ENCODE measurements at regions of chr6 and their contacts with region 1.

Region 1: GRCh38 chr6:121055572-121056163 is 278.6 kb downstream of the TBC1D32 start:
- DNase-seq: no peak
- ATAC-seq: peak in 3 of 4 donors; percentile 67 to 69 (median 69)
- H3K4me3 ChIP-seq: no peak overlapping the region
- H3K27ac ChIP-seq: no peak overlapping the region
- H3K4me1 ChIP-seq: no peaks in the 10 kb centered on the region
- H3K27me3 ChIP-seq: no peaks in the 10 kb centered on the region
- CTCF ChIP-seq: peak; percentile 54 to 81 (median 68)
- POLR2A ChIP-seq: no peak

Region 2: GRCh38 chr6:120373185-120373584 is 682.5 kb before region 1 on chr6:
- intact Hi-C with region 1: no loop called
- DNase-seq: no peak
- ATAC-seq: no peak
- H3K4me3 ChIP-seq: no peak overlapping the region
- H3K27ac ChIP-seq: no peak overlapping the region
- H3K4me1 ChIP-seq: no peaks in the 10 kb centered on the region
- H3K27me3 ChIP-seq: no peaks in the 10 kb centered on the region
- CTCF ChIP-seq: no peak
- POLR2A ChIP-seq: no peak

Region 3: DNA sequence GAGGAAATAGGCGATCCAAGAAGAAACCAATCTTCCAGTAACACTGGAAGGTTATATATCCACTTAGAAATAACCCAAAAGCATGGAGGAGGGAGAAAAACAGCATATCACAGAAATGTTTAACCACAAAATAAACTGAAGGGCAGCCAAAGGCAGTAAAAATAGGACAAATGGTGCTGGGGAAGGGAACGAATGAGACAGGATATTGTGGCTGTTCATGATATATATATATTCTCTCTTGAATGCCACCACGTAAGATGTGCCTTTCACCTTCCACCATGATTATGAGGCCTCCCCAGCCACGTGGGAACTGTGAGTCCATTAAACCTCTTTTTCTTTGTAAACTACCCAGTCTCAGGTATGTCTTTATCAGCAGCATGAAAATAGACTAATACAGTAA is 116.2 kb after region 1 on chr6:
- intact Hi-C with region 1: no loop called
- DNase-seq: no peak
- ATAC-seq: no peak
- H3K4me3 ChIP-seq: no peak overlapping the region
- H3K27ac ChIP-seq: no peak overlapping the region
- H3K4me1 ChIP-seq: no peaks in the 10 kb centered on the region
- H3K27me3 ChIP-seq: no peaks in the 10 kb centered on the region
- CTCF ChIP-seq: no peak
- POLR2A ChIP-seq: no peak

Region 4: DNA sequence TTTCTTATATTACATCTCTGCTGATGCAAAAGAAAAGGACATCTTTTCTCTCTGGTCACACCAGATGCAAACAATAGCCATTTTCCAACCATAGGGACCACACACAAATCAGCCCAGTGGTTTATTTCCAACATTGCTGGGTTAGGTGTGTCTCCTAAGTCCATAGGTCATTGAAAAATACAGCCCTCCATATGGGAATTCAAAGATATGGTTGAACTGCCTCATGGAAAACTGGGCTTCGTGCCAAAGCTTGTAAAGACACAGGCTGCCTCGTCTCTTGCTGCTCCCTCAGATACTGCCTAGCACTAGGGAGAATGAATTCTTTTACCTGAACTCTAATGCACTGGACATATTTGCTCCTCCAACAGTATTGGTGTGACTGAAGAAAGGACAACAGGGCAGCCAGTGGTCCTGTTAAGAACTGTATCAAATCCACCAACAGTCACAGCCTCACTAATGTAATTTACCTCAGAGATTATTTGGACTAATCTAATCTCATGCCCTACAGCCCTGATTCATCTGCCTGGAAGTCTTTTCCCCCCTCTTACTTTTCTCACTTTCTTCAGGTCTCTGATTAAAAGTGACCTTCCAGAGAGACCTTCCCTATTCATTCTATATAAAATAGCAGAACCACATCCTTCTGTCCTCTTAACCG is 326.9 kb after region 1 on chr6:
- intact Hi-C with region 1: no loop called
- DNase-seq: no peak
- ATAC-seq: no peak
- H3K4me3 ChIP-seq: no peak overlapping the region
- H3K27ac ChIP-seq: no peak overlapping the region
- H3K4me1 ChIP-seq: no peaks in the 10 kb centered on the region
- H3K27me3 ChIP-seq: no peaks in the 10 kb centered on the region
- CTCF ChIP-seq: no peak
- POLR2A ChIP-seq: no peak

Region 5: GRCh38 chr6:121393731-121394505 is 338.2 kb after region 1 on chr6:
- intact Hi-C with region 1: loop called in 2 of 10 experiments (anchors 10 kb)
- DNase-seq: no peak
- ATAC-seq: no peak
- H3K4me3 ChIP-seq: no peak overlapping the region
- H3K27ac ChIP-seq: no peak overlapping the region
- H3K4me1 ChIP-seq: no peaks in the 10 kb centered on the region
- H3K27me3 ChIP-seq: no peaks in the 10 kb centered on the region
- CTCF ChIP-seq: no peak
- POLR2A ChIP-seq: no peak

Region 6: GRCh38 chr6:122033539-122034181 is 978.0 kb after region 1 on chr6:
- intact Hi-C with region 1: loop called in 2 of 10 experiments (anchors 5 to 10 kb)
- DNase-seq: no peak
- ATAC-seq: peak; percentile 71 to 90 (median 86)
- H3K4me3 ChIP-seq: no peak overlapping the region
- H3K27ac ChIP-seq: peak overlapping the region in 3 of 12 donors; percentile 6 to 30 (median 9)
- H3K4me1 ChIP-seq: peaks cover 0 to 8% (median 0%) of the 10 kb centered on the region in 12 donors
- H3K27me3 ChIP-seq: no peaks in the 10 kb centered on the region
- CTCF ChIP-seq: peak; percentile 48 to 77 (median 63)
- POLR2A ChIP-seq: no peak

Region 7: GRCh38 chr6:122289762-122290539 is 1234.3 kb after region 1 on chr6:
- intact Hi-C with region 1: loop called in 2 of 10 experiments (anchors 10 kb)
- DNase-seq: no peak
- ATAC-seq: no peak
- H3K4me3 ChIP-seq: no peak overlapping the region
- H3K27ac ChIP-seq: no peak overlapping the region
- H3K4me1 ChIP-seq: peaks cover 0 to 4% (median 0%) of the 10 kb centered on the region in 12 donors
- H3K27me3 ChIP-seq: no peaks in the 10 kb centered on the region
- CTCF ChIP-seq: peak in 8 of 12 donors; percentile 13 to 48 (median 35)
- POLR2A ChIP-seq: no peak

Region 8: GRCh38 chr6:122372647-122373046 is 1317.0 kb after region 1 on chr6:
- intact Hi-C with region 1: loop called in 3 of 10 experiments (anchors 5 to 10 kb)
- DNase-seq: no peak
- ATAC-seq: no peak
- H3K4me3 ChIP-seq: no peak overlapping the region
- H3K27ac ChIP-seq: no peak overlapping the region
- H3K4me1 ChIP-seq: no peaks in the 10 kb centered on the region
- H3K27me3 ChIP-seq: no peaks in the 10 kb centered on the region
- CTCF ChIP-seq: peak in 8 of 12 donors; percentile 10 to 42 (median 26)
- POLR2A ChIP-seq: no peak

Measured in heart left ventricle (tissue), 16 donors.